ENCODE measurements at regions of chr7 and their contacts with region 1.

Region 1: DNA sequence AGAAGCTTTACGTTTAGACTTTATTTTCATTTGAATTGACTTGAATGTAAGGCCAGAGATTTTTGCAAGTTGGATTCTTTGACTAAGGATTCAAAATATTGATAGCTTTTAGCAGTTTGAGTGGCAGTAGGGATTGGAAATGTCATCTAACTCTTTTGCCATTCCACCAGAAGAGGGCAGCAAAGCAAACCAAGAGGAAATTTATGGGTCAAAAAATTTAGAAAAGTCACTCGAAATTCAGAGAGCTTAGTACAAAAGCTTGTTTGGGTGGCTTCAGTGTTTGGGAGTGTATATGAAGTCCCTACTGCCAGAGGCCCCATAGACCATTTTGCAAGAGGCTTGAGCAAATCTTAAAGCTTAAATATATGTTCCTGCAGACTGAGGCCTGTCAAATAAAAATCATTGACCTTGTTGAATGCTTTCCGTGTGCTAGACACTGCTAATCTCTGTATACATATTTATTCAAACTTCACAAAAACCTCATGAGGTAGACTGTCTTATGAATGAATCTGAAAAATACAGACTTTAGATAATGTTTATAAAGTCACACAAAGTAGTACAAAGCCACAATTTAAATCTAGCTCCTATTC is 44.6 kb upstream of the RSBN1L start:
- DNase-seq: no peak
- H3K4me3 Mint-ChIP-seq: no peak overlapping the region
- H3K27ac Mint-ChIP-seq: no peak overlapping the region
- H3K4me1 Mint-ChIP-seq: no peaks in the 10 kb centered on the region
- H3K27me3 Mint-ChIP-seq: no peaks in the 10 kb centered on the region

Region 2: GRCh38 chr7:77570330-77571011 is 81.2 kb before region 1 on chr7:
- CTCF ChIA-PET with region 1: no interaction called
- POLR2A ChIA-PET with region 1: no interaction called
- intact Hi-C with region 1: no loop called
- DNase-seq: no peak
- H3K4me3 Mint-ChIP-seq: no peak overlapping the region
- H3K27ac Mint-ChIP-seq: no peak overlapping the region
- H3K4me1 Mint-ChIP-seq: peaks cover 2% of the 10 kb centered on the region
- H3K27me3 Mint-ChIP-seq: no peaks in the 10 kb centered on the region

Region 3: GRCh38 chr7:77696198-77697028 is 44.7 kb after region 1 on chr7 and contains the start of gene RSBN1L:
- CTCF ChIA-PET with region 1: interaction called, 33 read pairs
- POLR2A ChIA-PET with region 1: no interaction called
- intact Hi-C with region 1: no loop called
- DNase-seq: peak; percentile 99
- H3K4me3 Mint-ChIP-seq: peak within 1 kb of the TSS; percentile 89
- H3K27ac Mint-ChIP-seq: peak within 1 kb of the TSS; percentile 95
- H3K4me1 Mint-ChIP-seq: peaks cover 51% of the 10 kb centered on the region
- H3K27me3 Mint-ChIP-seq: no peaks in the 10 kb centered on the region
- total RNA-seq, gene RSBN1L: 18.5 to 21.1 TPM

Region 4: DNA sequence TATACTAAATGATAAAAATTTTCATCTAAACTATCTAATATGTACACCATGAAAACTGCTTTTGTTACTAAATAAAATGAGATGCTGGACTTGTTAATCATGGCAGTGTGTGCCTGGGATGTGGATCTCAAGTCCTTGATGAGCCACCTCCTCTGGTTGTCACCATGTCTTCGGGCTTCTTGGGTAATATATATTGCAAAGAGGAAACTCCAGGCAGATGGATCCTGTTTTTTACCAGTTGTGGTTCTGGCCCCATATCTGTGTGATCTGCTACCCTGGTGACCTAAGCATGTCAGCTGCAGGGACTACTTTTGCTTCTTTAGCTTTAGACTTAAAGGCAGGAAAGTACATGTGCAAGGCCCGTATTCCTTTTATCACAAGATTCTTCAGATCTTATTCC is 100.4 kb after region 1 on chr7:
- CTCF ChIA-PET with region 1: interaction called, 39 read pairs
- POLR2A ChIA-PET with region 1: no interaction called
- intact Hi-C with region 1: no loop called
- DNase-seq: no peak
- H3K4me3 Mint-ChIP-seq: no peak overlapping the region
- H3K27ac Mint-ChIP-seq: no peak overlapping the region
- H3K4me1 Mint-ChIP-seq: peaks cover 42% of the 10 kb centered on the region
- H3K27me3 Mint-ChIP-seq: no peaks in the 10 kb centered on the region

Region 5: DNA sequence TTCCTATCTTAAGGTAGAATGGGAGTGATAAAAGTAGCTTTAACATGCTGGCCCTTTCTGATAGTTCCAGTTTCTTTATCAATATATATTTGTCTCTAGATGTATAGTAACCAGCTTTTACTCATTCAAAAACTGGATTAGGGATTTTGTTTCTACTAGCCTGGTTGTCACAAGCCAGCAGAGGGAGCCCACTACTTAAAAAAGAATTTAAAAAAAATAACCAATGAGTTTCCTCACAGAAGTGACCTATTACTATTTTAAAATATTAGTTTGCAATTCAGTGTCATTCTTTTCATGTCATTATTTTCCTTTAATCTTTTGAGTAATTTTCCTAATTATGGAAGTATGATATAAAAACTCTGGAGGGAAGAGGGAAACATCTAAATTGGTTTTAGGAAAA is 289.0 kb after region 1 on chr7:
- CTCF ChIA-PET with region 1: interaction called, 13 read pairs
- POLR2A ChIA-PET with region 1: no interaction called
- intact Hi-C with region 1: loop called (anchors 5 kb)
- DNase-seq: peak; percentile 18
- H3K4me3 Mint-ChIP-seq: no peak overlapping the region
- H3K27ac Mint-ChIP-seq: no peak overlapping the region
- H3K4me1 Mint-ChIP-seq: peaks cover 13% of the 10 kb centered on the region
- H3K27me3 Mint-ChIP-seq: no peaks in the 10 kb centered on the region

Region 6: GRCh38 chr7:78039790-78040776 is 388.4 kb after region 1 on chr7:
- CTCF ChIA-PET with region 1: interaction called, 22 read pairs
- POLR2A ChIA-PET with region 1: no interaction called
- intact Hi-C with region 1: loop called (anchors 2 kb)
- DNase-seq: peak; percentile 70
- H3K4me3 Mint-ChIP-seq: no peak overlapping the region
- H3K27ac Mint-ChIP-seq: no peak overlapping the region
- H3K4me1 Mint-ChIP-seq: peaks cover 4% of the 10 kb centered on the region
- H3K27me3 Mint-ChIP-seq: peaks cover 16% of the 10 kb centered on the region

Region 7: DNA sequence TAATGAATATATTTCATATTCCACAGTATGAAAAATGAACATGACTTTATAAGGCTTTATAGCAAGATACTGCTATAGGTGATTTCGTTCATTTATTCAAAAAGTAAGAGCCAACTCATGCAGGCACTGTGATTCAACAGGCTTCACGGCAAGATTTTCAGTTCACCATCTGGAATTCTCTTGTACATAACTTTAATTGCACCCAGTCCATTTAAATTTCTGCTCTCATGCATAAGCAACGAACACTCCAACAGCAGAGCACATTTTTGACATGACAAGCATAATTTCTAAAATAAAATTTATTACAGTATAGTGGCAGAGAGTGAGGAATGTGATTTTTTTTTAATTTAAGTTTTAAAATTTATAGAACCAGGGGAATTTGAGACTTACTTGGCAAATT is 583.0 kb after region 1 on chr7:
- CTCF ChIA-PET with region 1: no interaction called
- POLR2A ChIA-PET with region 1: no interaction called
- intact Hi-C with region 1: no loop called
- DNase-seq: no peak
- H3K4me3 Mint-ChIP-seq: no peak overlapping the region
- H3K27ac Mint-ChIP-seq: no peak overlapping the region
- H3K4me1 Mint-ChIP-seq: no peaks in the 10 kb centered on the region
- H3K27me3 Mint-ChIP-seq: no peaks in the 10 kb centered on the region